ENCODE measurements at regions of chr1 and their contacts with region 1.

Region 1: DNA sequence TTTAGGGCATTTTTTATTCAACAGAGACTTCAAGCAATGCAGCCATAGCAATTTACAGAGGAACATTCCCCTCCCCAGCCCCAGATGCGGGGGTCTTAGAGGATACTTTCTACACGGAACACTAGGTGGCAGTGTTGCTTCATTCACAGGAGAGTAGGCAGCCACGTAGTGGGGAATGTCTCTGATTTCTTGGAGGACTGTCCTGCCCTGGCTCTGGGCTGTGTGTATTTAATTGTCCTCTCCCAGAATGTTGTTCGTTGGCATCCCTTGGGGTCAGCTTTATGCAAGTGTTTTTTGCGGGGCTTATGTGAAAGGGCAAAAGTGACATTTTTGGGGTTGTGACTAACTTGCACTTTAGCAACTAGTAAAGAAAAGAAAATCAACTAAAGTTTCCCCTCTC is 96.9 kb downstream of the PAPPA2 start:
- DNase-seq: peak; percentile 37
- ATAC-seq: no peak
- H3K4me3 Mint-ChIP-seq: no peak overlapping the region
- H3K27ac Mint-ChIP-seq: no peak overlapping the region
- H3K4me1 Mint-ChIP-seq: no peaks in the 10 kb centered on the region
- H3K27me3 Mint-ChIP-seq: peaks cover 10% of the 10 kb centered on the region

Region 2: GRCh38 chr1:175459591-175460238 is 1100.2 kb before region 1 on chr1:
- CTCF ChIA-PET with region 1: no interaction called
- POLR2A ChIA-PET with region 1: no interaction called
- intact Hi-C with region 1: no loop called
- DNase-seq: no peak
- ATAC-seq: peak; percentile 36
- H3K4me3 Mint-ChIP-seq: no peak overlapping the region
- H3K27ac Mint-ChIP-seq: no peak overlapping the region
- H3K4me1 Mint-ChIP-seq: no peaks in the 10 kb centered on the region
- H3K27me3 Mint-ChIP-seq: peaks cover 20% of the 10 kb centered on the region

Region 3: GRCh38 chr1:176374967-176375569 is 184.8 kb before region 1 on chr1:
- CTCF ChIA-PET with region 1: no interaction called
- POLR2A ChIA-PET with region 1: no interaction called
- intact Hi-C with region 1: loop called in 1 of 2 experiments (anchors 5 kb)
- DNase-seq: peak; percentile 84
- ATAC-seq: peak; percentile 65
- H3K4me3 Mint-ChIP-seq: no peak overlapping the region
- H3K27ac Mint-ChIP-seq: no peak overlapping the region
- H3K4me1 Mint-ChIP-seq: no peaks in the 10 kb centered on the region
- H3K27me3 Mint-ChIP-seq: peaks cover 8% of the 10 kb centered on the region

Region 4: DNA sequence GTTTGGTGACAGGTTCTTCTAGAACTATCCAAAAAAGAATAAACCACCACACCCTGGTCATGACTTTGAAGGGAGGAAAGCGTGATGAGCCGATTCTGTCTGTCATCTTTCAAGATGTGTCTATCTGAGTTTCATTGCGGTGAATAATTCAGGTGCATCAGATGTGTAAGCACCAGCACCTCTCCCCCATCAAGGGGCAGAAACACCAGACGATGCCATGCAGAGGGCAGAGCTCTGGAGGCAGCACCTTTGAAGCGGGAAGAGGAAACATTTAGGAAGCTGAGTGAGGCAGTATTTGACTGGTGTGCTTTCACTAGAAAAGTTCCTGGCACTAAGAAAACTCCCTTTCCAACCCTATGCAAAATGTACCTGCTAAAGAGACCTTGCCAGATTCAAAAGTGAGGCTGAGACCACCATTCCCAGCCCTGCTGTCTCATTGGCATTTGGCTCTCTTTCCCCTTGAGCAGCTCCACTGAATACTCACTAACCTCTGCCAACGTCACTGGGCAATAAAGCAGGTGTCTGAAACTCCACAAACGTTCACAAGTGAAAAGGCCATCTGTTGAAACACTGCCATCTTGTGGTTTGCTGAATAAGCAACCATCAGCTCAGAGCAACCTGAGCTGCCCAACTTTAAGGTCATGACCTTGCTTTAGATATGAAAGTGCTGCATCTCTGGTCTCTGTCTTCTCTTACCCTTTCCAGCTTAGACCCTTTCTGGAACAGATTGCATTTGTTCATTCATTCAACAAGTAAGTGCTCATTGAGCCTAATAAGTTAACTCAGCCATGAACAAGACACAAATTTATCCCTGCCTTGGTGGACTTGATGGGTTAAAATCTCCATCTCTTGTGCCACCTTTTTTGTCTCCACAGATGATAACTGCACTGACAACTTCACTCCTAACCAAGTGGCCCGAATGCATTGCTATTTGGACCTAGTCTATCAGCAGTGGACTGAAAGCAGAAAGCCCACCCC is 131.7 kb after region 1 on chr1:
- CTCF ChIA-PET with region 1: interaction called, 22 read pairs
- POLR2A ChIA-PET with region 1: no interaction called
- intact Hi-C with region 1: loop called (anchors 1 to 2 kb)
- DNase-seq: peak; percentile 20
- ATAC-seq: peak; percentile 64
- H3K4me3 Mint-ChIP-seq: no peak overlapping the region
- H3K27ac Mint-ChIP-seq: no peak overlapping the region
- H3K4me1 Mint-ChIP-seq: no peaks in the 10 kb centered on the region
- H3K27me3 Mint-ChIP-seq: peaks cover 1% of the 10 kb centered on the region

Region 5: DNA sequence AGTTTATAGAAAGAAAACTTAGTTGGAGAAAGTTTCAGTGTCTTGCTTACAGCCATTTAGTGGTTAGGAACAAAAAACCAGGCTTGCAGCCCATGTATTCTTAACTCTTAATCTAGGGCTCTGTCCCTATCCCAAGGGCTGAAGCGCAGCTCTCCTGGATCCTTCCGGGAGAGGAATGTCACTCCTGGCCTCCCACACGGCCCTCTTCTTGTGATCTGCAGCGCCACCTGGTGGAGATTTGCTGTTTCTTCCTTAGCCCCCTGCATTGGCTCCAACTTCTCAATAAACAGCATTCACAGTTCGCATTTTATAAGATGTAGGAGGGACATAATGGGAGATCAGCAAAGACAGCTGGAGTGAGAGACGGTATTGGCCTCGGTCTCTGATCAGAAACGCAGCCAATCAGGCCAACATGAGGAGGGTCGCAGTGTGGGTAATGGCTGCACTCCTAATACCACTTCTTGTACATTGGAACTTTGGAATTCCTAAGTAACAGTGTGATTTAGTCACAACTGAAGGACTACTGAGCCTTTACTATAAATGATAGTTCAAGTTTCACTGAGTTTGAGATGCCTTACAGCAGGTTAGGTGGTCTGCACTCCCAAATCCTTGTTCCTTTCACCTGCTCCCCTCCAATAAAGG is 321.2 kb after region 1 on chr1:
- CTCF ChIA-PET with region 1: interaction called, 6 read pairs
- POLR2A ChIA-PET with region 1: no interaction called
- intact Hi-C with region 1: loop called (anchors 1 kb)
- DNase-seq: peak; percentile 74
- ATAC-seq: no peak
- H3K4me3 Mint-ChIP-seq: no peak overlapping the region
- H3K27ac Mint-ChIP-seq: no peak overlapping the region
- H3K4me1 Mint-ChIP-seq: no peaks in the 10 kb centered on the region
- H3K27me3 Mint-ChIP-seq: peaks cover 8% of the 10 kb centered on the region

Region 6: DNA sequence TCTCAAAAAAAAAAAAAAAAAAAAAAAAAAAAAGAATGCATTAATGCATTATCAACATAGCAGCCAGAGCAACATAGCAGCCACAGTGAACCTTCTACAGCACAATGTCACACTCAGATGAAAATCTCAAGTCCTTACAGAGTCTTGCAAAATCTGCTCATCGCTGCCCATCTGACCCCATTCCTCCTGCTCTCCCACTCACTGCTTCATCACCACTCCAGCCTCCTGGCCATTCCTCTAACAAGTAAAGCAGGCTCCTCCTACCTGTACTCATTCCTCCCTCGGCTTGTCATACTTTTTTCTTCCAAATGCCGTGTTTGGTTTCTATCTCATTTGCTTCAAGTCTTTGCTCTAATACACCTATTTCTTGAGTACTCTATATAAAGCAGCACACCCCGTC is 640.4 kb after region 1 on chr1:
- CTCF ChIA-PET with region 1: no interaction called
- POLR2A ChIA-PET with region 1: no interaction called
- intact Hi-C with region 1: no loop called
- DNase-seq: no peak
- ATAC-seq: no peak
- H3K4me3 Mint-ChIP-seq: no peak overlapping the region
- H3K27ac Mint-ChIP-seq: no peak overlapping the region
- H3K4me1 Mint-ChIP-seq: no peaks in the 10 kb centered on the region
- H3K27me3 Mint-ChIP-seq: no peaks in the 10 kb centered on the region

Region 7: GRCh38 chr1:177948336-177948972 is 1388.6 kb after region 1 on chr1:
- CTCF ChIA-PET with region 1: interaction called, 7 read pairs
- POLR2A ChIA-PET with region 1: no interaction called
- intact Hi-C with region 1: loop called in 1 of 2 experiments (anchors 10 kb)
- DNase-seq: peak; percentile 46
- ATAC-seq: peak; percentile 51
- H3K4me3 Mint-ChIP-seq: no peak overlapping the region
- H3K27ac Mint-ChIP-seq: no peak overlapping the region
- H3K4me1 Mint-ChIP-seq: no peaks in the 10 kb centered on the region
- H3K27me3 Mint-ChIP-seq: no peaks in the 10 kb centered on the region

Measured in activated CD4-positive, alpha-beta T cell treated with anti-CD3 and anti-CD28 coated beads for 36 hours (primary cell).